H1 (cell line): ENCODE measurements at regions of chr7 and their contacts with region 1.

Region 1: DNA sequence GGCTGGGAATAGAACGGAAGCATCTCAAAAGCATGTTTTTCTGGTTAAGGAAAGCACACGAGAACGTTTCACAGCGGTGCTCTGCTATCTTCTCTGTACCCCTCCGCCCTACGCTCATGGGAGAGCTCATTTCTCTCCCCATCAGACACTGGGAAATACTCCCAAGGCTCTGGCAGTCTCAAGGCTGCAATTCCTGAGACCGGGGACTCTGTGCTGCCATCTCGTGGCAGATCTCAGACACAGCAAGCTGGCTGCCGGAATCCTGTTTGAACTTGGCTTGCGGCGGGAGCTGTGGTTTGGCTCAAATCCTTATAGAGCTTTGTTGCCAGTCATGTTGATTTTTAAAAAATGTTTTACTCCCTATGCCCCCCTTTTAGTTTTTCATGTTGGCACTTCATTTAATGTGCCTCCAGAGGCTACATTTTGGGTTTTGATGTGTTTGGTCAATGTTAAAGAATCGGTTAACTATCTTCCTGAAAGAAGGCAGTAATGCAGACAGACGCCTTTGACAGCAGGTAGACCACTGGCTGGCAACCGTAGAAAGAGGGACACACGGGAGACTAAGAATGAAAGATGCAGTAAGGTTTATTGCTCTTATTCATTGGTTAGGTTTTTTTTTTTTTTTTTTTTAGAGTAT is 27.6 kb downstream of the BMPER start:
- DNase-seq: peak; percentile 75 to 91
- H3K4me3 ChIP-seq: no peak overlapping the region
- H3K27ac ChIP-seq: no peak overlapping the region
- H3K4me1 ChIP-seq: peaks cover 0 to 5% (median 0%) of the 10 kb centered on the region in 4 experiments; a peak in 2 of 7 replicates
- H3K27me3 ChIP-seq: no peaks in the 10 kb centered on the region
- CTCF ChIP-seq: peak; percentile 90 to 97 (median 92)
- EP300 ChIP-seq: no peak
- POLR2A ChIP-seq: no peak
- RAD21 ChIP-seq: peak; percentile 87 to 91

Region 2: DNA sequence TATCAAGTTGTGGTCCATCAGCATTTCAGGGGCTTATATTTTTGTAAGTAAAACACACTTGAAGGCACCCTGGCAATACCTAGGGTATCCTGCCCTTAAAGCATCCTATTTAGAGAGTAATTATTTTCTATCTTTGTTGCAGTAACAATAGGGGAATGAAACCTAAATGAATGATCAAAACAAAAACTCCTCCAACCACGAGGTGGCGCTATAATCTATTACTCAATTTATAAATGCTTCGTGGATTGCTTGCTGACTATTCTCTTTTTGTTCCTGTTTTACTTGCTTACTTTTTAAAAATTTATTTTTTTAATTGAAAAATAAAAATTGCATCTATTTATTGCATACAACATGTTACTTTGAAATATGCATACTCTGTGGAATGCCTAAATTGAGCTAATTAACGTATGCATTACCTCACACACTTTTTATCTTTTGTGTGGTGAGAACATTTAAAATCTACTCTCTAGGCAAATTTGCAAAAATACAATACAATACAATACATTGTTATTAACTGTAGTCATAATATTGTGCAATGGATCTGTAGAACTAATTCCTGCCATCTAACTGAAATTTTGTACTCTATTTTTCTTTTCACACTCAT is 175.3 kb before region 1 on chr7:
- CTCF ChIA-PET with region 1: interaction called, 35 read pairs
- POLR2A ChIA-PET with region 1: no interaction called
- DNase-seq: no peak
- H3K4me3 ChIP-seq: no peak overlapping the region
- H3K27ac ChIP-seq: no peak overlapping the region
- H3K4me1 ChIP-seq: peaks cover 0 to 5% (median 3%) of the 10 kb centered on the region in 4 experiments; a peak in 3 of 7 replicates
- H3K27me3 ChIP-seq: no peaks in the 10 kb centered on the region
- CTCF ChIP-seq: peak in 2 of 3 experiments; percentile 18 to 41; a peak in 2 of 4 replicates
- EP300 ChIP-seq: no peak
- POLR2A ChIP-seq: no peak
- RAD21 ChIP-seq: peak; percentile 52

Region 3: DNA sequence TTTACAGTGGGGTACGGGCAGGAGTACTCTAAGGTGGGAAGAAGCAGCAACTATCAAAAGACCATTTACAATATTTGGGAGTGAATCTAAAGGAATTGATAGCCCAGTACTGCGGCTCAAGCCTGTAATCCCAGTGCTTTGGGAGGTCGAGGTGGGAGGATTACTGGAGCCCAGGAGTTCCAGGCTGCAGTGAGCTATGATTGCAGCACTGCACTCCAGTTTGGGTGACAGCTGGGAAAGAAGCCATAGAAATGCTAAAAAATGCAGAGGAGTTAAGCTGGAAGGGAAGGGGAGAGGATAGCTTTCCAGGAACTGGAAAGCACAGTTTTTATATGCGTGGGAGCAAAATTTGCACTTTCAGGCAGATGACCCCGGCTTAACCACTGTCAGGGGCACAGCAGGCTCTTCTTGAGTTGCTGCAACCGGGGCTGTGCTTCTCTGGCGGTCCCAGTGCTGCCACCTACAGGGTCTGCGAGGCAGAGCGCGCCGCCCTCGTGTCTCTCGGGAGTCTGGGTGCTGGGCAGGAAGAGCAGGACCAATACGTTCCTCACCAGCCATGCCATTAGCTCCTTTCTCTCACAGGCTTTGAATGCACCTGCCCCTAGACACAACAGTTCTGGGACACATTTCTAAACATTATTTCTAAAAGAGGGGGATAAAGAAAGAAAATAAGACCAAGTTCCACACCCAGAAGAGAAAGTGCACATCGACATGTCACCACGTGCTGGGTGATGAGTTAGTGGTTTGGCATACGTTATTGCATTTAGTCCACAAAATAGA is 37.7 kb before region 1 on chr7:
- CTCF ChIA-PET with region 1: interaction called, 15 read pairs
- POLR2A ChIA-PET with region 1: no interaction called
- DNase-seq: peak; percentile 57 to 98
- H3K4me3 ChIP-seq: no peak overlapping the region
- H3K27ac ChIP-seq: no peak overlapping the region
- H3K4me1 ChIP-seq: peaks cover 0 to 3% (median 1%) of the 10 kb centered on the region in 4 experiments; a peak in 2 of 7 replicates
- H3K27me3 ChIP-seq: no peaks in the 10 kb centered on the region
- CTCF ChIP-seq: peak; percentile 84 to 93 (median 88)
- EP300 ChIP-seq: peak in 1 of 2 experiments; percentile 45; a peak in 1 of 3 replicates
- POLR2A ChIP-seq: no peak
- RAD21 ChIP-seq: peak; percentile 76 to 82

Region 4: GRCh38 chr7:33904681-33905388 is 28.1 kb before region 1 on chr7:
- CTCF ChIA-PET with region 1: interaction called, 13 read pairs
- POLR2A ChIA-PET with region 1: no interaction called
- DNase-seq: peak in 1 of 2 experiments; percentile 72
- H3K4me3 ChIP-seq: peak overlapping the region; percentile 46 to 73 (median 66)
- H3K27ac ChIP-seq: no peak overlapping the region
- H3K4me1 ChIP-seq: peaks cover 4 to 18% (median 7%) of the 10 kb centered on the region in 4 experiments; a peak in 6 of 7 replicates
- H3K27me3 ChIP-seq: peaks cover 5 to 41% (median 23%) of the 10 kb centered on the region in 4 experiments
- CTCF ChIP-seq: no peak
- EP300 ChIP-seq: no peak
- POLR2A ChIP-seq: no peak
- RAD21 ChIP-seq: no peak

Region 5: DNA sequence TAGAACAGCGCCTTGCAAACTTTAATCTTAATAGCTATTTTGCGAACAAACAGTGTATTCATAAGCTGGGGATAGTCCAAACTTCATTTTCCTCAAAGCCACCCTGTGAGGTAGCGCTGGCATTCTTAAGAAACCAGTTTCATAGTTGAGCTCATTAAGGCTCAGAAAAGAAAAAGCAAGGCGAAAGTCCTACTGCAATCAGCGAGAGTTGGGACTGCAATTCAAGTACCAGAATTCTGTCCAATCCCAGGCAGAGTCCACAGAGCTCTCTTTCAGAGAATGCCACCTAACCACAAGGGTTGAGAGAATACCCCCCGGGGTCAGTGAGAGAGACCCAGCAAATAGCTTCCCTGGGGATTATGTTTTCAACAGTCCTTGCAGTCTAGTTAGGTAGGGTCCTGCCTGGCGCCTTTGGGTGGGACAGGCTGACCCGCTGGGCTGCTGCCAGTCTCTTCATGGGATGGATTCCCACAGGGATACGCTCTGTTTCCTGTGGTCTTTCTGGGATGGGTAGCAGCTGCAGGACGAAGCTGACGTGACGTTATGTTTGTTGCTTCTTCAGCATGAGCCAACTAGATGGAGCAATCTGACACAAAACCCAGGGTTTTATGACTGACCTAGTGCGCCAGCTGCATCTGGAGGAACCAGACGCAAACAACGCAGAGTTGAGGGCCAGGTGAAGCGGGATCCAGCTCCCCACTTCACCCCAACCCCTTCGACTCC is 11.6 kb before region 1 on chr7:
- CTCF ChIA-PET with region 1: interaction called, 45 read pairs
- POLR2A ChIA-PET with region 1: no interaction called
- DNase-seq: no peak
- H3K4me3 ChIP-seq: no peak overlapping the region
- H3K27ac ChIP-seq: no peak overlapping the region
- H3K4me1 ChIP-seq: no peaks in the 10 kb centered on the region
- H3K27me3 ChIP-seq: no peaks in the 10 kb centered on the region
- CTCF ChIP-seq: no peak
- EP300 ChIP-seq: no peak
- POLR2A ChIP-seq: no peak
- RAD21 ChIP-seq: no peak

Region 6: GRCh38 chr7:33946094-33946700 is 13.2 kb after region 1 on chr7:
- CTCF ChIA-PET with region 1: interaction called, 17 read pairs
- POLR2A ChIA-PET with region 1: no interaction called
- DNase-seq: no peak
- H3K4me3 ChIP-seq: no peak overlapping the region
- H3K27ac ChIP-seq: no peak overlapping the region
- H3K4me1 ChIP-seq: no peaks in the 10 kb centered on the region
- H3K27me3 ChIP-seq: no peaks in the 10 kb centered on the region
- CTCF ChIP-seq: no peak
- EP300 ChIP-seq: no peak
- POLR2A ChIP-seq: no peak
- RAD21 ChIP-seq: no peak

Region 7: DNA sequence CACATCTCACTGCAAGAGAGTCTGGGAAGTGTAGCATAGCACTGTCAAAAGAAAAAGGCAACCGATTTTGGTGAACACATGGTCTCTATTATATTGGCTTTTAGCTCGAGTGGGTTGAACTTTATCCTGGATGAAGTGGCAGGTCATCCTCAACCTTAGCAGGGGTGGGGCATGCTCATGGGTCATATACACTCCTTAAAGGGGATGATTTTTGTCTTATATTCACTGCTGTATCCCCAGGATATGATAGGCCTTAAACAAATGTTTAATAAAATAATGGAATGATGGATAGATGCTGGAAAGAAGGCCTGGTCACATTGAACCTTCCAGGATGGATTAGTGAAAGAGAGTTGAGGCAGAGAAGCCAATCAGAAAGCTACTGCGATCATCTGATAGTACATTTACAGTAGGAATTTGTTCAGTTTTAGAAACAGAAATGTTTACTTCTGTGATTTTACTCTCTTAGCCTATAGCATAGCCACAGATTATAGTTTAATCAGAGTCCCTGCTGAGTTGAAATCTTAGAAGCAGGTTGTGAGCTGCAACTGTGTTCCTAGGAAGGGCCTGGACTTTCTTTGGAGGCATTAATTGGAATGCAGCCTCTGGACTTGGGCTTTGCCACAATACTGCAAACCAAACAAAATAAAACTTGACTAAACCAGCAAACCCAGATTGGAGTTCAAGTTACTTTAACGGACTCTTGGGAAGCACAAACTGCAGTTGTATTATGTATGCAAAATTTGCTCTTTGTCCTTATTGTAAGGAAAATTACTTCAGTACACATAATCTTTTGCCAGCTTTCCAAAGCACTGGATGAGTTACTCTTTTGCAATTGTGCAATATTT is 110.7 kb after region 1 on chr7:
- CTCF ChIA-PET with region 1: no interaction called
- POLR2A ChIA-PET with region 1: no interaction called
- DNase-seq: no peak
- H3K4me3 ChIP-seq: no peak overlapping the region
- H3K27ac ChIP-seq: no peak overlapping the region
- H3K4me1 ChIP-seq: no peaks in the 10 kb centered on the region
- H3K27me3 ChIP-seq: no peaks in the 10 kb centered on the region
- CTCF ChIP-seq: no peak
- EP300 ChIP-seq: no peak
- POLR2A ChIP-seq: no peak
- RAD21 ChIP-seq: no peak